ENCODE measurements at regions of chr1 and their contacts with region 1.

Region 1: GRCh38 chr1:28886731-28887418 is 27.5 kb upstream of the EPB41 start:
- DNase-seq: peak; percentile 81 to 85 (median 81)
- H3K4me3 ChIP-seq: peak overlapping the region; percentile 89 to 99 (median 99)
- H3K4me3 Mint-ChIP-seq: peak overlapping the region; percentile 85 to 92
- H3K27ac ChIP-seq: peak overlapping the region; percentile 78 to 98
- H3K27ac Mint-ChIP-seq: peak overlapping the region; percentile 98 to 100 (median 99)
- H3K4me1 ChIP-seq: peaks cover 39 to 57% of the 10 kb centered on the region in 2 donors
- H3K4me1 Mint-ChIP-seq: peaks cover 62% of the 10 kb centered on the region
- H3K27me3 ChIP-seq: no peaks in the 10 kb centered on the region
- H3K27me3 Mint-ChIP-seq: peaks cover 0 to 3% (median 0%) of the 10 kb centered on the region in 3 donors
- CTCF ChIP-seq: no peak

Region 2: GRCh38 chr1:28642847-28643635 is 243.8 kb before region 1 on chr1 and contains the start of gene TAF12:
- intact Hi-C with region 1: loop called in 1 of 2 experiments (anchors 10 kb)
- DNase-seq: peak; percentile 92 to 95 (median 94)
- H3K4me3 ChIP-seq: peak within 1 kb of the TSS; percentile 63 to 96 (median 68)
- H3K4me3 Mint-ChIP-seq: peak within 1 kb of the TSS; percentile 100
- H3K27ac ChIP-seq: peak within 1 kb of the TSS; percentile 77 to 97
- H3K27ac Mint-ChIP-seq: peak within 1 kb of the TSS; percentile 98 to 99 (median 99)
- H3K4me1 ChIP-seq: peaks cover 40 to 44% of the 10 kb centered on the region in 2 donors
- H3K4me1 Mint-ChIP-seq: peaks cover 42% of the 10 kb centered on the region
- H3K27me3 ChIP-seq: no peaks in the 10 kb centered on the region
- H3K27me3 Mint-ChIP-seq: peaks cover 0 to 2% (median 0%) of the 10 kb centered on the region in 3 donors
- CTCF ChIP-seq: no peak
- polyA plus RNA-seq, gene TAF12: 36.7 to 53.7 (median 53.7) TPM

Region 3: DNA sequence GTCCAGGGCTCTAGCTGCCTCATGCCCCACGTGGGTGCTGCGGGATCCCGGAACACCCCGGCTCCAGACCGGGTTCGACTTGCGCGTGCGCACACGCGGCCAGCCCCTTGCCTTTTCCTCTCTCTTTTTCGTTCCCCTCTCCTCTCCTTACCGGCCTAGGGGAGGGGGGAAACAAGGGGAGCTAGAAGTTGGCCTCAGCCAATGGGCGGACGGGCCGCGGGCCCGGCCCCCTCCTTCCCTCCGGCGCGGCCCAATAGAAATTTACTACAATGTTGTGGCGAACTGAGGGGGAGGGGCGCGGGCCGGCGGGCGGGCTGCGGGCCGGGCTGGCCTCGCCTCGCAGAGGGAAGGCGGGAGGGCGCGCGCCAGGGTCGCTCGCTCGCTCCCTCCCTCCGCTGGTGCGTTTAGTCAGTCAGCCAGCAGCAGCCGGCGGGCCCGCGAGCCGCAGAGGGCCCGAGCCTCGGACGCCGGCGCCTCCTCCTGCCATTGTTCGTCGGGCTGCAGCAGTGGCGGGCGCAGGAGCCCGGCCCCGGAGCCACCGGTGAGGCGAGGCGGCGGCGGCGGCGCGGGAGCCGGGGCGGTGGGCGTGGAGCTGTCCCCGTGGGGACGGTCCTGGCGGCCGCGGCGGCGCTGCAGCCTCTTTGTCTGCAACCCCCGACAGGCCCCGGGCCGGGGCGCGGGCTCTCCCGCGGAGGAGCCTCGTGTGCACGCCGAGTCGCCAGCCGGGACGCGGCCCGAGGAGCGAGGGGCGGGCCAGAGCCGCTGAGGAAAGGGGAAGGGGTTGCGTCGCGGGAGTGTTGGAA is 27.6 kb after region 1 on chr1 and contains the start of gene EPB41:
- intact Hi-C with region 1: loop called (anchors 1 to 5 kb)
- DNase-seq: peak; percentile 84 to 89 (median 87)
- H3K4me3 ChIP-seq: peak within 1 kb of the TSS; percentile 51 to 84 (median 72)
- H3K4me3 Mint-ChIP-seq: peak within 1 kb of the TSS; percentile 98
- H3K27ac ChIP-seq: peak within 1 kb of the TSS; percentile 6 to 63
- H3K27ac Mint-ChIP-seq: peak within 1 kb of the TSS; percentile 73 to 94 (median 83)
- H3K4me1 ChIP-seq: peaks cover 13 to 22% of the 10 kb centered on the region in 2 donors
- H3K4me1 Mint-ChIP-seq: peaks cover 26% of the 10 kb centered on the region
- H3K27me3 ChIP-seq: no peaks in the 10 kb centered on the region
- H3K27me3 Mint-ChIP-seq: peaks cover 2 to 8% (median 3%) of the 10 kb centered on the region in 3 donors
- CTCF ChIP-seq: no peak
- polyA plus RNA-seq, gene EPB41: 11.3 to 19.4 (median 18.9) TPM

Region 4: DNA sequence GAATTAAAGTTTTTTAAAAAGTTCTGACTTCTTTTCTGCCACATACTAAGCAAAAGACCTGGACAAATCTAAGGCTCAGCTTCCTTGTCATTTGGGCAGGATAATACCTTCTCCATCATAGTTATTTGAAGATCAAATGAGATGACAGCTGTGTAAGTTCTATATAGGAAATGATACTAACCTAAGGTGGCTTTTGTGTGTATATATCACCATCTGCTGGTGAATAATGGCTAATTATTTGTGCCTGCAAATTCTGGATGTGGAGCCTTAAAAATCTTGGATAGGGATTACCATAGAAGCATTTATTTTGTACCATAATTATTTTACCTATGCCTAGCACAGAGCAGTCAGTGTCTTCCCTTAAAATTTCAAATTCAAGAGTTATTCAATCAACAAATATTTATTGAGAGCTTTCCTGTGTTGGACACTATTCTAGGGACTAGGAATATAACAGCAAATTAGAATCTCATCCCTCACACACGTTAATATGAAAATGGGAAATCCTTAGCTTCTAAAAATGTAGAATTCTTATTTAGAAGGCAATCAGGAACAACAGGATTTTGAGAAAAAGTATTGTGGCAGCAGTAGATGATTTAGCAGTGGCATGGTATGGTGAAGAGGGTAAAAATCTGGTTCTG is 147.1 kb after region 1 on chr1:
- intact Hi-C with region 1: loop called (anchors 1 to 2 kb)
- DNase-seq: peak; percentile 13 to 40 (median 33)
- H3K4me3 ChIP-seq: no peak overlapping the region
- H3K4me3 Mint-ChIP-seq: no peak overlapping the region
- H3K27ac ChIP-seq: no peak overlapping the region
- H3K27ac Mint-ChIP-seq: no peak overlapping the region
- H3K4me1 ChIP-seq: no peaks in the 10 kb centered on the region
- H3K4me1 Mint-ChIP-seq: no peaks in the 10 kb centered on the region
- H3K27me3 ChIP-seq: no peaks in the 10 kb centered on the region
- H3K27me3 Mint-ChIP-seq: no peaks in the 10 kb centered on the region
- CTCF ChIP-seq: peak; percentile 76

Region 5: DNA sequence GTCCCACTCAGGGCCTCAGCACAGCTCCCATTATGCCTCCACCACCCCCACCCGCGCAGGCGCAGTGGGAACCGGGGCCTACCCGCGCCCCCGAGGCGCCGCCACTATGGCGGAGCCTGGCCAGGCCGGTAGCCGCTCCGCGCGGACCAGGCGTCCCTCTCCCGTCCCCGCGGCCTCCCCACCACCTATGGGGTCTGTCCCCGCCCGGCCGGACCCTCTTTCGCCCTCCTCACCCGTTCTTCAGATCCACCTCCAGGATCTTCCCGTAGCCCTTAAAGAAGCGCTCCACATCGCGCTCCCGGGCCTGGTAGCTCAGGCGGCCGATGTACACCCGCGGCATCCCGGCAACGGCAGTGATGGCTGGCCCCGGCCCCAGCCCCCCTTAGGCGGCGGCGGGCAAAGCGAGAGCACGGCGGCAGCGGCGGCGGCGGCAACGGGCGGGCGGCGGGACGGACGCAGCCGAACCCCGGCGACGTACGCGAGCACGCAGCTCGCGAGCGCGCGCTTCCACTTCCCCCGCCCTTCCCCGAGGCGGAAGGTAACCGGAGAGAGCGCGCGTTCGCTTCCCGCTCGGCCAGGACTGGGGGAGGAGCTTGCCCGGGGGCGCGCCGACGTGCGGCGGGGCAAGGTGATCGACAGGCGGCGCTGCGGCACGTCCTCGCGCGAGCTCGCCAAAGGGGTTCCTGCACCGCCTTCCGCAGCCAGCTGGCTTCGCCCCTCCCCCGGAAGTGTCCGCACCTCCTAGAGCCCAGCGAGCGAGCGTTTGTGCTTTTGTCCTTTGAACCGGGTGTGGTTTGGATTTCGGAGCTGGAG is 294.7 kb after region 1 on chr1 and contains the start of gene SRSF4:
- intact Hi-C with region 1: loop called in 1 of 2 experiments (anchors 5 kb)
- DNase-seq: peak; percentile 98 to 99 (median 98)
- H3K4me3 ChIP-seq: peak within 1 kb of the TSS; percentile 80 to 91 (median 87)
- H3K4me3 Mint-ChIP-seq: peak within 1 kb of the TSS; percentile 93 to 95
- H3K27ac ChIP-seq: peak within 1 kb of the TSS; percentile 91 to 96
- H3K27ac Mint-ChIP-seq: peak within 1 kb of the TSS; percentile 91 to 97 (median 95)
- H3K4me1 ChIP-seq: peaks cover 35 to 52% of the 10 kb centered on the region in 2 donors
- H3K4me1 Mint-ChIP-seq: peaks cover 51% of the 10 kb centered on the region
- H3K27me3 ChIP-seq: no peaks in the 10 kb centered on the region
- H3K27me3 Mint-ChIP-seq: peaks cover 0 to 2% (median 0%) of the 10 kb centered on the region in 3 donors
- CTCF ChIP-seq: peak; percentile 76
- polyA plus RNA-seq, gene SRSF4: 38.4 to 66.8 (median 55.5) TPM

Region 6: DNA sequence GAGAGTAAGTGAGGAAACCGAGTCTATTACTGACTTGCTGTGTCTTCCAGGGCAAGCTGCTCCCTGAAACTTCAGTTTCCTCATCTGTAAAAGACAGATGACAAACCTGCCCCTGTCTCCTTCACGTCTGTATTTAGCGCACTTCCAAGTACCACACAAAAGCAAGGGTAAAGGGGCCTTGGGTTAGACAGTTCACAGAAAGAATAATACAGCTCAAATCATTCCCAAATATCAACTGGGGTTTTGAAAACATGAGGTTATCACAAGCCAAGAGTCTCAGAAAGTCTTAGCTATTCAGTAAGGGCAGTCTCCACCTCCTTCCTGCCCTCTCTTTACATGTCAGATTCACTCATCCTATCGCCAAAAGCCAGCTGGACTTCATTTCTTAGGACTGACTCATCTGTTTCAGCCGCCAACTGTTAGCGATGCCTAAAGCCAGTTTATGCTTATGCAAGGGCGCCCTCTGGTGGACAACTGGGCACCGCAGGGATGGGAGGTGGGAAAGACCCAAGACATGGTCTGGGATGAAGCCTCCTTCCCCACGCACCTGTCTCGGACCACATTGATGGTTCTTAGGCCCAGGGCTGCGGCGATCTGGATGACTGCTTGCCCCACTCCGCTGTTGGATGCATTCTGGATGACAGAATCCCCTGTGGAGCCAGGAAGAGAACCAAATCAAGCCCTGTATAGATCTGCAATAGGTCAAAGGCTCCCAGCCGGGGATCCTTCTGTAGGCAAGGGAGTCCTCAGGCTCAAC is 315.9 kb after region 1 on chr1:
- intact Hi-C with region 1: loop called in 1 of 2 experiments (anchors 1 kb)
- DNase-seq: peak; percentile 87 to 92 (median 92)
- H3K4me3 ChIP-seq: peak overlapping the region in 1 of 3 experiments; percentile 34
- H3K4me3 Mint-ChIP-seq: peak overlapping the region in 1 of 2 donors; percentile 51
- H3K27ac ChIP-seq: peak overlapping the region; percentile 57 to 76
- H3K27ac Mint-ChIP-seq: peak overlapping the region; percentile 78 to 95 (median 85)
- H3K4me1 ChIP-seq: peaks cover 19 to 22% of the 10 kb centered on the region in 2 donors
- H3K4me1 Mint-ChIP-seq: peaks cover 20% of the 10 kb centered on the region
- H3K27me3 ChIP-seq: no peaks in the 10 kb centered on the region
- H3K27me3 Mint-ChIP-seq: no peaks in the 10 kb centered on the region
- CTCF ChIP-seq: peak; percentile 88